Endothelial cell of umbilical vein (primary cell): ENCODE measurements at regions of chr3 and their contacts with region 1.

Region 1: DNA sequence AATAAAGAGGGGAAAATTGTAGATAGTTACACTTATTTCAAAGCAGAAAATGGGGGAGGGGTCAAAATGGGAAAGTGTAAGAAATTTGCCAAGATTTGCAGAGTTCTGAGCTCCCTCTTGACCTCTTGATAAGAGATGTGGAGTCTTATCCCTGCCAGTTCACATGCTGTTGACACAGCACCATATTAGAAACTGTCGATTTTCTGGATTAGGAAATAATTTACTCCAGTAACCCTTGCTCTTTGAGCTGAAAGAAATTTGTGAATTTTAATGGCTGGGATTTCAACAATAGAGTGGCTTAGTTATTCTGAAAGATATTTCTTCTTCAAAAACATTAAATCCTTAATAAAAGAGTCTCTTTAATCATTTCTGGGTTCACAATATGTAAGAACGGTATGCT is 306.2 kb upstream of the CNTN4 start:
- DNase-seq: no peak
- H3K4me3 ChIP-seq: no peak overlapping the region
- H3K27ac ChIP-seq: no peak overlapping the region
- H3K4me1 ChIP-seq: no peaks in the 10 kb centered on the region
- H3K27me3 ChIP-seq: no peaks in the 10 kb centered on the region
- CTCF ChIP-seq: no peak
- POLR2A ChIP-seq: no peak

Region 2: GRCh38 chr3:166071-166470 is 1626.4 kb before region 1 on chr3:
- CTCF ChIA-PET with region 1: no interaction called
- POLR2A ChIA-PET with region 1: no interaction called
- dilution Hi-C with region 1: no loop called
- intact Hi-C with region 1: loop called (anchors 5 kb)
- DNase-seq: no peak
- H3K4me3 ChIP-seq: no peak overlapping the region
- H3K27ac ChIP-seq: no peak overlapping the region
- H3K4me1 ChIP-seq: no peaks in the 10 kb centered on the region
- H3K27me3 ChIP-seq: no peaks in the 10 kb centered on the region
- CTCF ChIP-seq: no peak
- POLR2A ChIP-seq: no peak

Region 3: GRCh38 chr3:1571736-1572135 is 220.7 kb before region 1 on chr3:
- CTCF ChIA-PET with region 1: no interaction called
- POLR2A ChIA-PET with region 1: no interaction called
- dilution Hi-C with region 1: no loop called
- intact Hi-C with region 1: no loop called
- DNase-seq: no peak
- H3K4me3 ChIP-seq: no peak overlapping the region
- H3K27ac ChIP-seq: no peak overlapping the region
- H3K4me1 ChIP-seq: no peaks in the 10 kb centered on the region
- H3K27me3 ChIP-seq: no peaks in the 10 kb centered on the region
- CTCF ChIP-seq: no peak
- POLR2A ChIP-seq: no peak